ENCODE measurements at regions of chr4 and their contacts with region 1.

Region 1: DNA sequence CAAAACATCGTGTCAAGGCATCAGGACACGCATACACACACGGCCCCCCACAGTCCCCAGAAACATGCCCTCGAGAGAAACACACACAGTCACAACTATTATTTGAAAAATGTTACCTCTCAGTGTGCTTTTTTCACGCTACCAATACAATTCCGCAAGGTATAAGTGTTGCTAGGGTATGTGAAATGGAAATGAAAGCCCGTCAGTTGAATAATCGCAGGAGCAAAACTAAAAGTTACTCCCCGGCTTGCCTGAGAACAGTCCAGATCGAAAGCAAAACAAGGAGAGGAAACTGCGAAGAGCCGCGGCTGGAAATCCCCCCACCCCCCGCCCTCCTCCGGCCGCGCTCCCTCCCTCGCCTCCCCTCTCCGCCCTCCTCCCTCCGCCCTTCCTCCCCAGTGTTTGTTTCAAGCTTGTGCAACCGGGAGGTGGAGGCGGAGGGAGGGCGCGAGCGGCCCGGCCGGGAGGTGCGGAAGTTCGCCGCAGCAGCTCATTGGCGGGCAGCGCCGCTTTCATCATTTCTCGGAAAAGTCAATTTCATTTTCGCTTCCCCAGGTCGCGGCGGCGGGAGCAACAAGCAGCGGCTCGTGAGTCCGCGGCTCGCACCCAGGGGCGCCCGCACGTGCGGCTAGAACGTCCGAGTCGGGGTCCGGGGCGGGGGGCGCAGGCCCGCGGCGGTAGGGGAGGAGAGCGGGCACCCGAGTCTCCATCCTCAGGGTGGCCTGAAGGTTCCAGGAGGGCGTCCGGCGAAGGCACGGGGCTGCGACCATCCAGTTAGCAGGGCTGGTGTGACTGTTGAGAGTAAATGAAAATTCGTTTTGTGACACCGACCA is at the start of gene IRF2:
- DNase-seq: peak; percentile 96 to 99 (median 99)
- H3K4me3 ChIP-seq: peak within 1 kb of the TSS; percentile 86 to 100 (median 97)
- H3K4me3 Mint-ChIP-seq: peak within 1 kb of the TSS; percentile 99
- H3K27ac ChIP-seq: peak within 1 kb of the TSS; percentile 99
- H3K27ac Mint-ChIP-seq: peak within 1 kb of the TSS; percentile 96 to 99 (median 99)
- H3K4me1 ChIP-seq: peaks cover 53 to 65% of the 10 kb centered on the region in 2 donors
- H3K4me1 Mint-ChIP-seq: peaks cover 60% of the 10 kb centered on the region
- H3K27me3 ChIP-seq: no peaks in the 10 kb centered on the region
- H3K27me3 Mint-ChIP-seq: no peaks in the 10 kb centered on the region
- CTCF ChIP-seq: no peak
- polyA plus RNA-seq, gene IRF2: 51.3 to 76.8 (median 56.1) TPM

Region 2: DNA sequence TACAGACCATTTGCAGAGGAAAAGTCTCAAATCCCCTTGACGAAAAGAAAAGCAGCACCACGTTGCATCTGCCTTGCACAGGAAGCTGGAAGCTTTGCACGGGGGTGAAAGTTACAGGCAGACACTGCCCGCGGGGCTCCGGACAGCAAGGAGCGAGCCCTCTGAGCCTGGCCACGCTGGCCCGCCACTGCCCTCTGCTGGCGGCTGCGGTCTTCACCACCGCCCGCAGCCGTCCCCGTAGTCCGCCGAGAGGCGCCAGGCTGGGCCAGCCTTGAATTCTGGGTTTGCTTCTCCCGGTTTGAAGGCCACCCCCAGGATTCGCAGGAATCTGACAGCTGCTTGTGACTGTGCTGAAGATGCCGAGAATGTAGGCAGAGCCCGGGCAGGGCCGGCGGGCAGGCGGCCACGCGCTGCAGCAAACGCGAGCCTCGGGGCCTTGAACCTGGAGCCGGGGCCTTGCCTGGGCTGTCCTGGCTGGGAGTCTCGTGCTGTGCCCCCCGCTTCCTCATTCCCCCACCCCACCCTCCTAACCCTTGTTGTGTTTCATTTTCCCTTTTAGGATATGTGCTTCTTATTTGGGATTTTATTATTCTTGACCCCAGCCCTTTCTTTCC is 306.0 kb before region 1 on chr4:
- intact Hi-C with region 1: no loop called
- DNase-seq: peak; percentile 30 to 62 (median 53)
- H3K4me3 ChIP-seq: peak overlapping the region in 1 of 3 experiments; percentile 43
- H3K4me3 Mint-ChIP-seq: peak overlapping the region in 1 of 2 donors; percentile 79
- H3K27ac ChIP-seq: no peak overlapping the region
- H3K27ac Mint-ChIP-seq: no peak overlapping the region
- H3K4me1 ChIP-seq: peaks cover 4 to 8% of the 10 kb centered on the region in 2 donors
- H3K4me1 Mint-ChIP-seq: peaks cover 7% of the 10 kb centered on the region
- H3K27me3 ChIP-seq: peaks cover 12 to 13% of the 10 kb centered on the region in 2 donors
- H3K27me3 Mint-ChIP-seq: peaks cover 27 to 50% (median 34%) of the 10 kb centered on the region in 3 donors
- CTCF ChIP-seq: peak; percentile 97

Region 3: GRCh38 chr4:184263910-184264732 is 210.4 kb before region 1 on chr4:
- intact Hi-C with region 1: loop called in 1 of 2 experiments (anchors 2 kb)
- DNase-seq: peak; percentile 85 to 91 (median 90)
- H3K4me3 ChIP-seq: no peak overlapping the region
- H3K4me3 Mint-ChIP-seq: peak overlapping the region; percentile 14 to 61
- H3K27ac ChIP-seq: peak overlapping the region in 1 of 2 donors; percentile 24
- H3K27ac Mint-ChIP-seq: peak overlapping the region in 4 of 7 donors; percentile 15 to 74 (median 31)
- H3K4me1 ChIP-seq: peaks cover 22 to 38% of the 10 kb centered on the region in 2 donors
- H3K4me1 Mint-ChIP-seq: peaks cover 44% of the 10 kb centered on the region
- H3K27me3 ChIP-seq: no peaks in the 10 kb centered on the region
- H3K27me3 Mint-ChIP-seq: peaks cover 0 to 4% (median 0%) of the 10 kb centered on the region in 3 donors
- CTCF ChIP-seq: peak; percentile 80

Region 4: DNA sequence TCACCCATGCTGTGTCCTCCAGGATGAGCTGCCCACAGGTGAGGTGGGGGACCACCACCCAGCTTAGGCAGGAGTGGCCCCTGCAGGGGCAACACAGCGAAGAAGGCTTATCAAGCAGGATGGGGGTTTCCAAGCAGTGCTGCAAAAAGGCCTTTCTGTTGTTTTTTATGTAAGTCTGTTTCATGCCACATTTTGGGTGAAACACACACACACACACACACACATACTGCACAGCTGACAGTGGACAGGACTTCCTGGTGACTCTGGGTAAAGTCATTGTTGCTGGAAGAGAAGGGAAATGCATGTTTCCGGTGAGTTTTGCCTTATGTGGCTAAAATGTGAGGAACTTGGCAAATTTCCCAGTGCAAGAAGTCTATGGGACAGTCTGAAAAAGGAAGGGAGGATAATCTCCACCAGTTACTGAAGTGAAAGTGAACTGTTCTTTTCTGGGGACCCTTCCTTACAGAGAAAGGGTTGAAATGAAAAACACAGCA is 119.3 kb before region 1 on chr4:
- intact Hi-C with region 1: loop called in 1 of 2 experiments (anchors 10 kb)
- DNase-seq: peak; percentile 94 to 99 (median 97)
- H3K4me3 ChIP-seq: peak overlapping the region in 1 of 3 experiments; percentile 52
- H3K4me3 Mint-ChIP-seq: peak overlapping the region in 1 of 2 donors; percentile 26
- H3K27ac ChIP-seq: peak overlapping the region; percentile 91 to 94
- H3K27ac Mint-ChIP-seq: peak overlapping the region; percentile 88 to 96 (median 94)
- H3K4me1 ChIP-seq: peaks cover 44 to 50% of the 10 kb centered on the region in 2 donors
- H3K4me1 Mint-ChIP-seq: peaks cover 55% of the 10 kb centered on the region
- H3K27me3 ChIP-seq: no peaks in the 10 kb centered on the region
- H3K27me3 Mint-ChIP-seq: no peaks in the 10 kb centered on the region
- CTCF ChIP-seq: no peak

Region 5: GRCh38 chr4:184417802-184418511 is 56.5 kb before region 1 on chr4:
- intact Hi-C with region 1: loop called in 1 of 2 experiments (anchors 5 kb)
- DNase-seq: peak; percentile 69 to 92 (median 89)
- H3K4me3 ChIP-seq: peak overlapping the region in 1 of 3 experiments; percentile 66
- H3K4me3 Mint-ChIP-seq: peak overlapping the region in 1 of 2 donors; percentile 75
- H3K27ac ChIP-seq: peak overlapping the region; percentile 73 to 91
- H3K27ac Mint-ChIP-seq: peak overlapping the region; percentile 93 to 98 (median 96)
- H3K4me1 ChIP-seq: peaks cover 53 to 64% of the 10 kb centered on the region in 2 donors
- H3K4me1 Mint-ChIP-seq: peaks cover 63% of the 10 kb centered on the region
- H3K27me3 ChIP-seq: no peaks in the 10 kb centered on the region
- H3K27me3 Mint-ChIP-seq: no peaks in the 10 kb centered on the region
- CTCF ChIP-seq: no peak

Region 6: DNA sequence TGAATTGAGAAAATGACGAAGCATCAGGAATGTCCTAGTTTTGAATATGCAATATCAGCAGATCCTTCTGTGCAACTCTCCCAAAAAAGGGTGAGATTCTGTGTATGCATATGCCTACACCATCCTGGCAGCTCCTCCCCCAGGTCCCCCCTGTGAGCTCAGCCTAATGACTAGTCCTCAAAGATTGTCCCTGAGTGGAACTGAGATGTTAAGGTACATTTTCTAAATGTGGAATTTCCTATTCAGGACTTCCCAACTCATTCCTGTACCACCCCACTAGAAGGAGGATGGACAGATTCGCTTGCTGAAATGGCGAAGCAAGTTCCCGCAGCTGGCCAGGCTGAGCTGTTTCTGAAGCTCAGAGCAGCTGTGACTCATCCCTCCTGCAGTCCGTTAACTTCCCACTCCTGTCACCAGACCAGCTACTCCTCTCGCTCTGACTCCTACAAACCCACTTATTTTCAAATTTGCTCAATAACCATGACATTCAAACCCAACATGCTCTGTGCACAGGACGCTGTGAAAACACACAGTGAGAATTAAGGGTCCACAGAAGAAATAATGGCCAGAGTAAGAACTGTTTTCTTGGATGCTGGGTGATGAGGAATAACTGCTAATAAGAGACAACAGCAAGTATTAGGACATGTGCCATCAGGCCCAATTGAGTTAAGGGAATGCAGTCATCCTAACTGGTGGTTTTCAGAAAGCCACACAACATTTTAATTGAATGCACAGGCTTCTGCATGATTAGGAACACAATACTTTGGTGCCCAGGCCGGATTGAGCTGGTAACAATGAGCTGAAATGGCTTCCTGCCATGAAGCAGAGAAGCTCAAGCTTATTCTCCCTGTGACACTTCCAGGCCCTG is 39.9 kb after region 1 on chr4:
- intact Hi-C with region 1: loop called (anchors 5 kb)
- DNase-seq: peak; percentile 79 to 96 (median 88)
- H3K4me3 ChIP-seq: peak overlapping the region in 1 of 3 experiments; percentile 40
- H3K4me3 Mint-ChIP-seq: peak overlapping the region; percentile 18 to 65
- H3K27ac ChIP-seq: peak overlapping the region; percentile 18 to 78
- H3K27ac Mint-ChIP-seq: peak overlapping the region; percentile 59 to 89 (median 83)
- H3K4me1 ChIP-seq: peaks cover 42 to 47% of the 10 kb centered on the region in 2 donors
- H3K4me1 Mint-ChIP-seq: peaks cover 46% of the 10 kb centered on the region
- H3K27me3 ChIP-seq: no peaks in the 10 kb centered on the region
- H3K27me3 Mint-ChIP-seq: no peaks in the 10 kb centered on the region
- CTCF ChIP-seq: no peak

Region 7: GRCh38 chr4:184538023-184538599 is 63.6 kb after region 1 on chr4:
- intact Hi-C with region 1: loop called (anchors 2 kb)
- DNase-seq: peak; percentile 88 to 92 (median 92)
- H3K4me3 ChIP-seq: peak overlapping the region; percentile 79 to 96 (median 79)
- H3K4me3 Mint-ChIP-seq: peak overlapping the region; percentile 89 to 93
- H3K27ac ChIP-seq: peak overlapping the region; percentile 96 to 99
- H3K27ac Mint-ChIP-seq: peak overlapping the region; percentile 99 to 100 (median 100)
- H3K4me1 ChIP-seq: peaks cover 30 to 36% of the 10 kb centered on the region in 2 donors
- H3K4me1 Mint-ChIP-seq: peaks cover 46% of the 10 kb centered on the region
- H3K27me3 ChIP-seq: no peaks in the 10 kb centered on the region
- H3K27me3 Mint-ChIP-seq: peaks cover 0 to 5% (median 3%) of the 10 kb centered on the region in 3 donors
- CTCF ChIP-seq: peak; percentile 77

Measured in CD14-positive monocyte (primary cell).